ENCODE measurements at regions of chr1 and their contacts with region 1.

Region 1: GRCh38 chr1:157734321-157734720 is 33.8 kb upstream of the FCRL3 start:
- DNase-seq: peak in 2 of 14 experiments; percentile 12
- ATAC-seq: no peak
- H3K4me3 ChIP-seq: no peak overlapping the region
- H3K4me3 Mint-ChIP-seq: no peak overlapping the region
- H3K27ac ChIP-seq: no peak overlapping the region
- H3K27ac Mint-ChIP-seq: no peak overlapping the region
- H3K4me1 ChIP-seq: no peaks in the 10 kb centered on the region
- H3K4me1 Mint-ChIP-seq: no peaks in the 10 kb centered on the region
- H3K27me3 ChIP-seq: no peaks in the 10 kb centered on the region
- H3K27me3 Mint-ChIP-seq: no peaks in the 10 kb centered on the region
- CTCF ChIP-seq: no peak

Region 2: GRCh38 chr1:157782931-157783330 is 48.6 kb after region 1 on chr1:
- CTCF ChIA-PET with region 1: no interaction called
- POLR2A ChIA-PET with region 1: no interaction called
- intact Hi-C with region 1: loop called in 1 of 2 experiments (anchors 2 kb)
- DNase-seq: no peak
- ATAC-seq: no peak
- H3K4me3 ChIP-seq: no peak overlapping the region
- H3K4me3 Mint-ChIP-seq: no peak overlapping the region
- H3K27ac ChIP-seq: no peak overlapping the region
- H3K27ac Mint-ChIP-seq: no peak overlapping the region
- H3K4me1 ChIP-seq: no peaks in the 10 kb centered on the region
- H3K4me1 Mint-ChIP-seq: no peaks in the 10 kb centered on the region
- H3K27me3 ChIP-seq: no peaks in the 10 kb centered on the region
- H3K27me3 Mint-ChIP-seq: peaks cover 5% of the 10 kb centered on the region
- CTCF ChIP-seq: no peak